IMR-90 (cell line): ENCODE measurements at regions of chr3 and their contacts with region 1.

Region 1: DNA sequence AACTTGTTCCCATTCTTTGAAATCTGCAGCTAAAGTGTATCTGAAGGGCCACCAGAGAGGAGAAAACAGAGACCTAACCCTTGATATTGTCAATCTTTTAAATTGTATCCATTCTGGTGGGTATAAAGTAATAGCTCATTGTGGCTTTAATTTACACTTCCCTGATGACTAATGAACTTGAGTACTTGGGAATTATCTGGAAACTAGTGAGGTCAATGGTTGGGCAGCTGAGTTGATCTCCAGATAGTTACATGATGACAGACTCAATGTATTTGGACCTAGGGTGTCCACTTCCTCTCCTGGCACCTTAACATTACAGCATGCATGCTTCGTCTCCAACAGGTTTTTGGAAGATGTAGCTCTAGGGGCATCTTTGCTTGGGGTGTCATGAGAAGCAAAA is 195.2 kb downstream of the PDCD6IP start:
- DNase-seq: peak; percentile 47
- ATAC-seq: peak; percentile 58
- H3K4me3 ChIP-seq: no peak overlapping the region
- H3K27ac ChIP-seq: no peak overlapping the region
- H3K4me1 ChIP-seq: peaks cover 3% of the 10 kb centered on the region; the same call in 1 of the 2 replicates
- H3K27me3 ChIP-seq: no peaks in the 10 kb centered on the region
- CTCF ChIP-seq: no peak
- POLR2A ChIP-seq: no peak
- RAD21 ChIP-seq: no peak

Region 2: GRCh38 chr3:33940149-33940548 is 53.5 kb before region 1 on chr3:
- CTCF ChIA-PET with region 1: no interaction called
- POLR2A ChIA-PET with region 1: interaction called, 11 read pairs
- dilution Hi-C with region 1: no loop called
- in situ Hi-C with region 1: no loop called
- intact Hi-C with region 1: no loop called
- DNase-seq: peak; percentile 25
- ATAC-seq: no peak
- H3K4me3 ChIP-seq: no peak overlapping the region
- H3K27ac ChIP-seq: no peak overlapping the region
- H3K4me1 ChIP-seq: no peaks in the 10 kb centered on the region
- H3K27me3 ChIP-seq: peaks cover 6% of the 10 kb centered on the region
- CTCF ChIP-seq: no peak
- POLR2A ChIP-seq: no peak
- RAD21 ChIP-seq: no peak